ENCODE measurements at regions of chr2 and their contacts with region 1.

Region 1: DNA sequence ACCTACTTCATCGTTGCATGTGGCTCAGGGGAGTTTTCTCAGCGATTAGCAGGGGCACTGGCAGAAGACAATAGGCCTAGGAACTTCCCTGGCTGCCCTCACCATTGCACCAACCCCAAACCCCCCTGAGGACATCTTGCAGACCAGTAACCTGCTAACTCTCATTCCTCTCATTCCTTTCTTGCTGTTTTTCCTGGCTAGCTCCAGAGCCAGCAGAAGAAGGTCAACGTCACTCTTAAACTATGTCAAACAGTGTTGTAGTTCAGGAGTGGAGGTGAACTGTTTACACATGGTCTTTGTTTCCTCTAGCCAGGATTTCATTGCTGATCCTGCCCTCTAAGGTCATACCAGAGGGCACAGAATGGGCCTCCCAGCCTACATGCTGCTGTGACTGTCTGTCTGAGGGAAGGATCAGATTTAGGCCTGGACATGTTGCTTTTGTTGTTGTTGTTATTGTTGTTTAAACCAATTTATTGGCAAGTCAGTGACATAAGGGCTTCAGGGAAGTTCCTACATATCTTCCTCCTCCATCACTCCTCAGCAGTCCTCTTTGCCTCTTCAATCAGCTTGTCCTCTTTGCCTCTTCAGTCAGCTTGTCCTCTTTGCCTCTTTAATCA is 471.8 kb upstream of the TNP1 start:
- DNase-seq: peak; percentile 85 to 88
- H3K4me3 ChIP-seq: no peak overlapping the region
- H3K4me3 Mint-ChIP-seq: peak overlapping the region; percentile 12
- H3K27ac Mint-ChIP-seq: peak overlapping the region; percentile 78
- H3K4me1 ChIP-seq: peaks cover 25% of the 10 kb centered on the region
- H3K4me1 Mint-ChIP-seq: peaks cover 35% of the 10 kb centered on the region
- H3K27me3 ChIP-seq: no peaks in the 10 kb centered on the region
- H3K27me3 Mint-ChIP-seq: no peaks in the 10 kb centered on the region
- CTCF ChIP-seq: no peak

Region 2: GRCh38 chr2:217064234-217065024 is 267.2 kb before region 1 on chr2:
- CTCF ChIA-PET with region 1: no interaction called
- POLR2A ChIA-PET with region 1: no interaction called
- intact Hi-C with region 1: no loop called
- DNase-seq: no peak
- H3K4me3 ChIP-seq: no peak overlapping the region
- H3K4me3 Mint-ChIP-seq: no peak overlapping the region
- H3K27ac Mint-ChIP-seq: no peak overlapping the region
- H3K4me1 ChIP-seq: no peaks in the 10 kb centered on the region
- H3K4me1 Mint-ChIP-seq: peaks cover 6% of the 10 kb centered on the region
- H3K27me3 ChIP-seq: no peaks in the 10 kb centered on the region
- H3K27me3 Mint-ChIP-seq: peaks cover 3% of the 10 kb centered on the region
- CTCF ChIP-seq: no peak

Region 3: DNA sequence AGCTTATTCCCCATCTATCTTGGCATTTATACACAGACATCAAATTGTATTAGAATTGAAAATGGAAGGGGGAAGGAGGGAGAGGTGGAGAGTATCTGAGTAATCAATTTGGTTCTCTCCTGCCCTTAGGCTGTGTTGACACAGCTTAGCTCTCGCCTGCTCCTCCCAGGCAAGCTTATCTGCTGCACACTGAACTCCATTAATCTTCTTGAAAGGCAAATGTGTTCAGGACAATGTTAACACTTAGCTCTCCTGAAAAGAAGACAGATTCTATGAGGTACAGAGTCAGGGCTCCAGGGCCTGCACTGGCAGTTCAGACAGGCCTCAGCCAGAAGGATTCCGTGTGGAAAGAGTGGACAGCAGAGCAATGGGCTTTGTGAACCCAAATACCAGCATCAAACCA is 41.8 kb before region 1 on chr2:
- CTCF ChIA-PET with region 1: no interaction called
- POLR2A ChIA-PET with region 1: no interaction called
- intact Hi-C with region 1: loop called (anchors 1 kb)
- DNase-seq: peak; percentile 77 to 86
- H3K4me3 ChIP-seq: no peak overlapping the region
- H3K4me3 Mint-ChIP-seq: peak overlapping the region; percentile 48
- H3K27ac Mint-ChIP-seq: peak overlapping the region; percentile 86
- H3K4me1 ChIP-seq: peaks cover 35% of the 10 kb centered on the region
- H3K4me1 Mint-ChIP-seq: peaks cover 36% of the 10 kb centered on the region
- H3K27me3 ChIP-seq: no peaks in the 10 kb centered on the region
- H3K27me3 Mint-ChIP-seq: no peaks in the 10 kb centered on the region
- CTCF ChIP-seq: no peak

Region 4: DNA sequence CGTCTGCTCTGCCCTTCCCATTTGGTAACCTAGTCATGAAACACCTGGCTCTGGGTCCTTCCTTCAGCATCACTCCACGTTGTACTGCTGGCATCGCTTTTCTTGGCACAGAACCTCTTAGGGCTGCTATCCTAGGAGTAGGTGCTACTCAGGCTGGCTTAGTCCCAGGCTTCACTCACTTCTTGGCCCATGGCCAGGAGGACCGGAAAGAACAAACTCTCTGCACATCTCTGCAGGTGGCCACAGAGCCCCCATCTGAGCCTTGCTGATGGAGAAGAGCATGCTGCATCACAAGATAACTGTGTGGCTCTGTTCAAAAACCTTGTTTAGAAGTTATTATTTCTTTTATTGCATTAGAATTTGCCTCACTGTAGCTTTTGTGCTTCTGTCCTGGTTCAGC is 24.6 kb before region 1 on chr2:
- CTCF ChIA-PET with region 1: no interaction called
- POLR2A ChIA-PET with region 1: no interaction called
- intact Hi-C with region 1: no loop called
- DNase-seq: no peak
- H3K4me3 ChIP-seq: no peak overlapping the region
- H3K4me3 Mint-ChIP-seq: no peak overlapping the region
- H3K27ac Mint-ChIP-seq: no peak overlapping the region
- H3K4me1 ChIP-seq: no peaks in the 10 kb centered on the region
- H3K4me1 Mint-ChIP-seq: no peaks in the 10 kb centered on the region
- H3K27me3 ChIP-seq: no peaks in the 10 kb centered on the region; the same call in 1 of the 2 replicates
- H3K27me3 Mint-ChIP-seq: peaks cover 2% of the 10 kb centered on the region
- CTCF ChIP-seq: no peak

Region 5: DNA sequence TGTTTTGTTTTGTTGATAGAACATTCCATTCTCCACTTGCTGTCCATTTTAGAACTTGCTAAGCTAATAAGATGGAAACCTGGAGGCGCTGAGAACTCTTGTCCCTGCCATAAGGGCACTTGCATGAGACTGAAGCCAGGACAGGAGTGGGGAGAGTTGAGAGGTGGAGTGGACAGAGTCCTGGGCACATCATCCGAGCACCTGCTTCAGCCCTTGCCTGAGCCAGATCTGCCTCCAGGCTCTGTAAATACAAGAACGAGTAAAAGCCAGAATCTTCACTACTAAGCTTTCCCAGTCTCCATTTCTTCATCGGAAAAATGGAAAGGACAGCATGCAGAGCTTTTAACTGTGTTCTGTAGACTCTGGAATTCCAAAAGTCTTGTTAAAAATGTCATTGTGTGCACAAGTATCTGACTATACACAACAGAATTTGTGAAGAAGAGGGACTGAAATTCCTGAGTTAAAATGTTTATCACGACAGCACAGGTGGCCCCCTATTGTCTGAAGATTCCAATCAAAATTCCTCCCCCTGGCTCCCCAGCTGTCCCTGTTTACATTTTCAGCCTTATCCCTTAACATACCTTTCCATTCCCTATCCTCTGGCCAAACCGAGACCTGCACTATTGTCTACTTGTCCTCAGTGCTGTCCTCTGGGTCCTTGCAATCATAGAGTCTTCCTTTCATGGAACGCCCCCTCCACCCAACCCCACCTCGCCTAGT is 26.4 kb after region 1 on chr2:
- CTCF ChIA-PET with region 1: no interaction called
- POLR2A ChIA-PET with region 1: no interaction called
- intact Hi-C with region 1: loop called (anchors 1 kb)
- DNase-seq: peak; percentile 37 to 39
- H3K4me3 ChIP-seq: no peak overlapping the region
- H3K4me3 Mint-ChIP-seq: no peak overlapping the region
- H3K27ac Mint-ChIP-seq: peak overlapping the region; percentile 5
- H3K4me1 ChIP-seq: peaks cover 24% of the 10 kb centered on the region
- H3K4me1 Mint-ChIP-seq: peaks cover 36% of the 10 kb centered on the region
- H3K27me3 ChIP-seq: no peaks in the 10 kb centered on the region
- H3K27me3 Mint-ChIP-seq: no peaks in the 10 kb centered on the region
- CTCF ChIP-seq: no peak